HEK293 (cell line): ENCODE measurements at regions of chr1 and their contacts with region 1.

Region 1: GRCh38 chr1:233790662-233791375 is 113.7 kb upstream of the SLC35F3 start:
- H3K4me3 ChIP-seq: no peak overlapping the region
- H3K27ac ChIP-seq: no peak overlapping the region
- H3K4me1 ChIP-seq: no peaks in the 10 kb centered on the region
- CTCF ChIP-seq: peak; percentile 90

Region 2: DNA sequence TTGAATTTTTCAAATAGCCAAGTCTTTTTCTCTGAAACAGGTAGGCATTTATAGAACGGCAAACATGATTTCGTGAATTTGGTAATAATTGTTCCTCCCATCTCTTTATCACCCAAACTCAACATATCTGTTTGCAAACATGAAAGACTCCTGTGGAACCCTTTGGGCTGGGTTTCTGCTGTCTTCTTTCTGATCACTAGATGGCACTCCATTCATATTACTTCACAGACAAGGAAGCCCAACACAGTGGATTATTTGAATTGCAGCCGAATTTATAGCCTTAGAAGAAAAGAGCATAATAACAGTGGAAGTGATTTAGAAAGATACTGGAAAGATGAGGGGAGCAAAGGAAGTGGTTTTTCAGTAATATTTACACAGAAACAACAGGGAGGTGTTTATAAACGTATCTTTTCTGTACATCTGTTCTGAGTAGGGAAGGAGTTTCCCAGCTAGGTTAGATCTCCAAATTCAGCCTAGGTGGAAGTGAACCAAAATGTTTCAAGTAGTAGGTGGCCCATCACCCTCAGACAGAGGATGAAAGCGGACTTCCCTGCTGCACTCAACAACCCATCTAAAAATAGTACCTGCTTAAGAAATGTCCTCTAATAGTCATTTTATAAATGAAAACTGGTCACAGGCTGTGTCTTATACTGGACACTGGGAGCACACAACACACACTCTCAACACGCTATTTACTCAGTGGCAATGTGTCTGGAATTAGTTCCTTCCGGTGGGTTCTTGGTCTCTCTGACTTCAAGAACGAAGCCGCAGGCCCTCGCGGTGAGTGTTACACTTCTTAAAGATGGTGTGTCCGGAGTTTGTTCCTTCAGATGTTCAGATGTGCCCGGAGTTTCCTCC is 395.7 kb before region 1 on chr1:
- CTCF ChIA-PET with region 1: interaction called, 12 read pairs
- POLR2A ChIA-PET with region 1: no interaction called
- H3K4me3 ChIP-seq: no peak overlapping the region
- H3K27ac ChIP-seq: no peak overlapping the region
- H3K4me1 ChIP-seq: no peaks in the 10 kb centered on the region
- CTCF ChIP-seq: peak; percentile 80